ENCODE measurements at regions of chr1 and their contacts with region 1.

Region 1: GRCh38 chr1:77126307-77126706 is 92.9 kb downstream of the PIGK start:
- DNase-seq: peak; percentile 86
- H3K4me3 ChIP-seq: no peak overlapping the region
- H3K27ac ChIP-seq: no peak overlapping the region
- H3K4me1 ChIP-seq: no peaks in the 10 kb centered on the region
- H3K27me3 ChIP-seq: no peaks in the 10 kb centered on the region

Region 2: DNA sequence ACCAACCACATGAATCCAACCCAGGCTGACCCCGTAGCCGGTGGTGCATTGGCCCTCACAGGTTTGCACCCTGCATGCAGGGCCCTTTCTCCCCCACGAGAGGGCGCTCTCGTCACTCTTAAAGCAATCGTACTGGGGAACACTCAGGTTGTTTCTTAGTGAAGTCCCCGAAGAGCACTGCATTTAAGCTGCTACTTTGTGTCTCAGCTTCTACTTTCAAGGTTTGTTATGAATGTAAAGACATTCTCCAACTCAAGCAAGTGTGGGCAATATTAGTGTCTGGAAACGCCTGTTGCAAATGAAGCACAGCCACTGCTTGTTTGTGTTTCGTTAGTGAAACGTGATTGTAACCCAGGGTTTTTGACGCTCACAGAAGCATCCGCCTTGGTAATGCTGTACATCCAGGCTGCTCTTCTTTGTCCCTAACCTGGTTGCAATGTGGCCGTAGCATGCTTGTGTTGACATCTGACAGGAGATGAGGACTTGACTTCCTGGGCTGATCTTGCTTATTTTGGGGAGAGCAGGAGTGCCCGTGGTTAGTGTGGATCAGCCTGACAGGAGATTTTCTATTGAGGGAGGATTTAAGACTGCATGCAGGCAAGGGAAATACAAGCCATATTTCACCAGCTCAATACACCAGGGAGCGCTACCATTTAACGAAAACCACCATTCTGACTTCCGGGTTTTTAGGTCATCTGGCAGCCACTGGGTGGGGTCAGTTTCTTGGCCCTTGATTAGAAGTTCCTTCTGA is 971.9 kb before region 1 on chr1:
- in situ Hi-C with region 1: loop called (anchors 10 kb)
- DNase-seq: peak; percentile 82
- H3K4me3 ChIP-seq: peak overlapping the region; percentile 80
- H3K27ac ChIP-seq: no peak overlapping the region
- H3K4me1 ChIP-seq: peaks cover 4% of the 10 kb centered on the region; the same call in 1 of the 2 replicates
- H3K27me3 ChIP-seq: no peaks in the 10 kb centered on the region

Region 3: DNA sequence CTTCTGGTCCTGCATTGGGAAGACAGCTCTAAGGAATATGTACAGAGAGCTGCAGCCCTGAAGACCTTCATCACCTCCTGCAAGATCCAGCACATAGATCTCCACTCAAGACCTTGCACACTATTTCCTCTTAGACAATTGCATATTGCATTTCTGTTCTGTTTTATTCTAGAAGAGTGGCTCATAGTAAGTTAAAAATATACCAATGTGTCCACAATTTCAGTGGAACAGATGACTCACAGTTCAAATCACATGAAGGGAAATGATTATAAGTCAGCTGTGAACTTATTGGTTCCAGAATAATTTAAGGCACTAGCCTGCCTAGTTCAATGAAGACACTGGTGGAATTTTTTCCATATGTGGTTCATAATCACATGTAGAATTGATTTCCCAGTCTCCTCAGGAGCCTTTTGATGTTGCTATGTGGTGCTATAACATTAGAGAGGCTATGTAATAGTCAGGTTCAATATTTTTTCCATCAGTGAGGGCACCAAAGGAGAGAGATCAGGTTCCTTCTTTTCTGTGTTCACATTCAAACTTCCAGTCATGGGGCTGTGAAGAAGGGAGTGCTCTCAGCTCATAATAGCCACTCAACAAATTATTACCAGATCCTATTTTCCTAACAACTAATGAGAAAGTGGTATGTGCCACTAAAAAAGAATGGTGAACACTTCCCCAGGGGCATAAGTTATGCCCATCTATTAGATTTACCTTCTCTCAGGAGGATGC is 145.7 kb after region 1 on chr1:
- in situ Hi-C with region 1: no loop called
- DNase-seq: peak; percentile 73
- H3K4me3 ChIP-seq: no peak overlapping the region
- H3K27ac ChIP-seq: peak overlapping the region; percentile 16; the same call in 1 of the 2 replicates
- H3K4me1 ChIP-seq: peaks cover 11% of the 10 kb centered on the region; the same call in 1 of the 2 replicates
- H3K27me3 ChIP-seq: no peaks in the 10 kb centered on the region

Region 4: DNA sequence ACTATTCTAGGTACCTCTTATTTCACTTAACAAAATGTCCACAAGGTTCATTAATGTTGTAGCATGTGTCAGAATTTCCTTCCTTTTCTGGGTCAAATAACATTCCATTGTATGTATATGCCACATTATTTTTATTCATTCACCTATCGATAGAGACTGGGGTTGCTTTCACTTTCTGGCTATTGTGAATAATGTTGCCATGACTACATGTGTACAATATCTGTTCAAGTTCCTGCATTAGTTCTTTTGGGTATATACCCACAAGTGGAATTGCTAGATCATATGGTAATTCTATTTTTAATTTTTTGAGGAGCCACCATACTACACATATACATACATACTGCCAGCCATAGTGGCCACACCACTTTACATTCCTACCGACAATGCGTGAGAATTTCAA is 397.7 kb after region 1 on chr1:
- in situ Hi-C with region 1: no loop called
- DNase-seq: no peak
- H3K4me3 ChIP-seq: no peak overlapping the region
- H3K27ac ChIP-seq: no peak overlapping the region
- H3K4me1 ChIP-seq: no peaks in the 10 kb centered on the region
- H3K27me3 ChIP-seq: no peaks in the 10 kb centered on the region

Region 5: GRCh38 chr1:77594366-77595112 is 468.2 kb after region 1 on chr1:
- in situ Hi-C with region 1: no loop called
- DNase-seq: no peak
- H3K4me3 ChIP-seq: no peak overlapping the region
- H3K27ac ChIP-seq: no peak overlapping the region
- H3K4me1 ChIP-seq: peaks cover 7% of the 10 kb centered on the region; the same call in 1 of the 2 replicates
- H3K27me3 ChIP-seq: no peaks in the 10 kb centered on the region